GM12878 (cell line): ENCODE measurements at regions of chr12 and their contacts with region 1.

Region 1: GRCh38 chr12:26832822-26833742 is at the start of gene ITPR2:
- DNase-seq: peak; percentile 60
- ATAC-seq: peak; percentile 84
- H3K4me3 ChIP-seq: peak within 1 kb of the TSS; percentile 87
- H3K27ac ChIP-seq: peak within 1 kb of the TSS; percentile 80
- H3K4me1 ChIP-seq: peaks cover 5% of the 10 kb centered on the region
- H3K27me3 ChIP-seq: no peaks in the 10 kb centered on the region
- CTCF ChIP-seq: peak; percentile 20 to 51 (median 21); a peak in 3 of 6 replicates
- EP300 ChIP-seq: no peak
- POLR2A ChIP-seq: peak; percentile 87
- RAD21 ChIP-seq: peak; percentile 61
- polyA plus RNA-seq, gene ITPR2: 7.5 to 10.9 TPM

Region 2: DNA sequence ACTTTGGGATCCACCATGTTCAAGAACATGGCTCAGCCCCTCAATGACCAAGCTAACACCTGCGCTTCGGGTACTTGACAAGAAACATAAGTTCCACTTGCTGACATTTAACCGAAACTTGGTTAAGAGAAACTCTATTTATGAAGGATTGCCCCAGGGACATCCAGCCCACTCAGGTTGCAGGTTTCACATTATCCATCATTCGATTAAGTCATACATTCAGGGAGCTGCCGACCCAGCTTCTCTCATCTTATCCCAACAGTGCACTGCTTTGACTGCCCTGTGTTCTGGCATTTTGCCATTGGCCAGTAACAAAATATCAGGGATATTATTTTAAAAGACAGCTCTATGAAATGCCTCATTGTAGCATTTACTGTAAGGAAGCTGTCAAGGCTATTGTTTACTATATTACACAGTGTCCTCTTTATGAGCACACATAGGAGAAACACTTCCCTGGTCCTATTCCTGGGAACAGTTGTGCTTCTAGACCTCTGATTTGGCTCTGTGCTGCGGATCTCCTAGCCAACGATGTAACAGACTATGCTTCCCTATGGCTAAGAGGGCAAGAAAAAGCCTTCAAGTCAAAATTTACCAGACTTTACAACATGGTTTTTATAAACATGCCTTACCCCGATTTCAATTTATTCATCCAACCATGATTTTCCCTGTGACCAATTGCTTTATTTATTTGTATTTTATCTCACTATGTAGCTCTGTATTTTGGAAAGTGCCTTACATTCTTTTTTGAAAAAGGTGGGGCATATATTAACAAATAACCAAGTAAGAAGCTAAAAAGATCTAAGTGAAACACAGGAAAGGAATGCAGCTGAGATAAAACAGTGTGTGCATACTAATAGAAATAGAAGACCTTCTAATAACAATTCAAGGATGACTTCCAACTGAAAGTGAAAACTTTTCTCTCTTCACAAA is 109.4 kb before region 1 on chr12:
- CTCF ChIA-PET with region 1: interaction called, 22 read pairs
- POLR2A ChIA-PET with region 1: interaction called, 10 read pairs
- RAD21 ChIA-PET with region 1: interaction called, 31 read pairs
- SMC1A ChIA-PET with region 1: interaction called, 38 read pairs
- in situ Hi-C with region 1: no loop called
- intact Hi-C with region 1: loop called (anchors 2 kb)
- DNase-seq: no peak
- ATAC-seq: peak; percentile 43
- H3K4me3 ChIP-seq: no peak overlapping the region
- H3K27ac ChIP-seq: no peak overlapping the region
- H3K4me1 ChIP-seq: peaks cover 34% of the 10 kb centered on the region
- H3K27me3 ChIP-seq: no peaks in the 10 kb centered on the region
- CTCF ChIP-seq: no peak
- EP300 ChIP-seq: peak in 1 of 2 experiments; percentile 33; a peak in 1 of 4 replicates
- POLR2A ChIP-seq: no peak
- RAD21 ChIP-seq: no peak

Region 3: GRCh38 chr12:26748741-26749431 is 84.2 kb before region 1 on chr12:
- CTCF ChIA-PET with region 1: interaction called, 7 read pairs
- POLR2A ChIA-PET with region 1: interaction called, 4 read pairs
- RAD21 ChIA-PET with region 1: interaction called, 8 read pairs
- SMC1A ChIA-PET with region 1: interaction called, 10 read pairs
- in situ Hi-C with region 1: no loop called
- intact Hi-C with region 1: loop called (anchors 2 kb)
- DNase-seq: peak; percentile 86
- ATAC-seq: peak; percentile 56
- H3K4me3 ChIP-seq: peak overlapping the region; percentile 32; the same call in 1 of the 2 replicates
- H3K27ac ChIP-seq: peak overlapping the region; percentile 91
- H3K4me1 ChIP-seq: peaks cover 64% of the 10 kb centered on the region
- H3K27me3 ChIP-seq: no peaks in the 10 kb centered on the region
- CTCF ChIP-seq: no peak
- EP300 ChIP-seq: peak; percentile 4 to 80
- POLR2A ChIP-seq: no peak
- RAD21 ChIP-seq: no peak

Region 4: GRCh38 chr12:26845057-26845666 is 12.1 kb after region 1 on chr12:
- CTCF ChIA-PET with region 1: interaction called, 80 read pairs
- POLR2A ChIA-PET with region 1: interaction called, 15 read pairs
- RAD21 ChIA-PET with region 1: interaction called, 51 read pairs
- SMC1A ChIA-PET with region 1: interaction called, 27 read pairs
- in situ Hi-C with region 1: no loop called
- intact Hi-C with region 1: no loop called
- DNase-seq: no peak
- ATAC-seq: peak; percentile 43; the same call in 2 of the 3 replicates
- H3K4me3 ChIP-seq: no peak overlapping the region
- H3K27ac ChIP-seq: no peak overlapping the region
- H3K4me1 ChIP-seq: peaks cover 10% of the 10 kb centered on the region
- H3K27me3 ChIP-seq: no peaks in the 10 kb centered on the region
- CTCF ChIP-seq: peak; percentile 38 to 59 (median 56)
- EP300 ChIP-seq: no peak
- POLR2A ChIP-seq: no peak
- RAD21 ChIP-seq: peak; percentile 58

Region 5: GRCh38 chr12:26870491-26871419 is 37.7 kb after region 1 on chr12:
- CTCF ChIA-PET with region 1: interaction called, 5 read pairs
- POLR2A ChIA-PET with region 1: interaction called, 8 read pairs
- RAD21 ChIA-PET with region 1: interaction called, 17 read pairs
- SMC1A ChIA-PET with region 1: interaction called, 7 read pairs
- in situ Hi-C with region 1: no loop called
- intact Hi-C with region 1: no loop called
- DNase-seq: peak; percentile 35
- ATAC-seq: peak; percentile 33
- H3K4me3 ChIP-seq: no peak overlapping the region
- H3K27ac ChIP-seq: no peak overlapping the region; the same call in 1 of the 2 replicates
- H3K4me1 ChIP-seq: peaks cover 48% of the 10 kb centered on the region
- H3K27me3 ChIP-seq: no peaks in the 10 kb centered on the region
- CTCF ChIP-seq: no peak
- EP300 ChIP-seq: no peak
- POLR2A ChIP-seq: no peak
- RAD21 ChIP-seq: no peak